Heart left ventricle (tissue), 16 donors: ENCODE measurements at regions of chr2 and their contacts with region 1.

Region 1: DNA sequence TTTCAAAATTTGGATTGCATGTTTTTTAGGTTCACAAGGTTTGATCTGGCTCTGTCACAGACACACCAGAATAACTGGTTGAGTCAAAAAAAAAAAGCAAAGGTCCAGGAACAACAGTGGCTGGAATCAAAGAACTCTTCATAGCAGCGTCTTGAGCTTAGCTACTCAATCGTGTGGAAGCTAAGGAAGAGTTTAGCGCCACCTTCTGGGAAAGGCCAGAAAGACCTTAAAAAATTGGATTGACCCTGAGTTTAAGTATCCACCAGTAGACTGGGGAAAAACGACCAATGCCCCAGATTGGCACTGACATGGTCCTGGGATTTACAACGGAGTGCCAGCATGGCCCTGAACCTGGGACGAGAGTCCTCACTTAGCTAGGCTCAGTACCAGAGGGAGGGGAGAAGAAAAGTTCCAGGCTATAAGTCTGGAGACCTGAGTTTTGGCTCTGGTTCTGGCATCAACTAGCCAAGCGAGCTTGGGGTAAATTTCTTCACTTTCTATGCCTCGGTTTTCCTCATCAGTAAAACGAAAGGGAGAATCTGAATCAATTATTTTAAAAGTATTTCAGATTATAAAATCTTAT is 71.1 kb upstream of the TFCP2L1 start:
- DNase-seq: peak in 1 of 5 donors; percentile 29
- ATAC-seq: peak in 2 of 4 donors; percentile 23 to 41
- H3K4me3 ChIP-seq: no peak overlapping the region
- H3K27ac ChIP-seq: peak overlapping the region in 1 of 12 donors; percentile 14
- H3K4me1 ChIP-seq: peaks cover 0 to 37% (median 14%) of the 10 kb centered on the region in 12 donors
- H3K27me3 ChIP-seq: no peaks in the 10 kb centered on the region
- CTCF ChIP-seq: peak; percentile 40 to 74 (median 64)
- POLR2A ChIP-seq: no peak

Region 2: GRCh38 chr2:120693121-120693520 is 663.0 kb before region 1 on chr2:
- intact Hi-C with region 1: loop called in 1 of 10 experiments (anchors 10 kb)
- DNase-seq: no peak
- ATAC-seq: no peak
- H3K4me3 ChIP-seq: no peak overlapping the region
- H3K27ac ChIP-seq: no peak overlapping the region
- H3K4me1 ChIP-seq: peaks cover 0 to 5% (median 0%) of the 10 kb centered on the region in 12 donors
- H3K27me3 ChIP-seq: peaks cover 0 to 57% (median 16%) of the 10 kb centered on the region in 9 donors
- CTCF ChIP-seq: no peak
- POLR2A ChIP-seq: no peak

Region 3: DNA sequence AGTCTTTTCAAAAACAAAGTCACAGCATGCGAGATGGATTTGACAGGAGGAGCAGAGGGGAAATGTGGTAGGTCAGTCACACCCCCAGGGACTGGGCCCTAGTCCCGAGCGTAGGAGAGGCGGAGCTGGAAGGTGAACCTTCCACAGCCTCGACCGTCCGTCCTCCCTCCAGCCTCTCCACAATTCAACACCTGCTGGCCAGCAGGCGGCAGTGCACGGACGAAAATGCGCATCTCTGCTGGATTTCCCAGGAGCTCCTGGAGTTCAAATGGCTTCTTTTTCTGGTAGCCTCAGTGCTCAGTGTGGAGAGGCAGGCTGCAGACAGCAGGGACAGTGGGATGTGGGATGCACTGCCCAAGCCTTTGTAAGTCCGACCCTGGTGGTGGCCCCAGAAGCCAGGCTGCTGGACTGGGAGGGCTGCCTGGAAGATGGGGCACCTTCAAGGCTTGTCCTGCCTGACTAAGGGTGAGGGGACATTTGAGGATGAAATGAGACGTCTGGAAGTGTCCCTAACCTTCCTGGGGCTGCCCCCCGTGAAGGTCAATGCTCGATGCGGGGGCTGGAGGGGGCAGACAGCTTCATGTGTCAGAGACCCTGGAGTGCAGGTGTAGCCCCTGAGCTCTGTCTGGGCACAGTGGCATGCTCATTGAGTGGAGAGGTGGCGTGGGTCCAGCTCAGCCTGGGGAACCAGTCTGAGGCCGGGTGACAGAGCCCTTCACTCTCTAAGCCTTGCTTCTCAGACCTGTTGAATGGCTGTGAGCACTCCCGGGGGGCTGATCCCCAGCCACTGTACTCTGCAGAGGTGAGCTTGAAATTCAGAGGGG is 260.7 kb before region 1 on chr2:
- intact Hi-C with region 1: loop called (anchors 2 to 10 kb)
- DNase-seq: peak; percentile 45 to 77 (median 64)
- ATAC-seq: peak; percentile 18 to 48 (median 36)
- H3K4me3 ChIP-seq: no peak overlapping the region
- H3K27ac ChIP-seq: no peak overlapping the region
- H3K4me1 ChIP-seq: peaks cover 0 to 11% (median 2%) of the 10 kb centered on the region in 12 donors
- H3K27me3 ChIP-seq: no peaks in the 10 kb centered on the region
- CTCF ChIP-seq: peak; percentile 53 to 68 (median 59)
- POLR2A ChIP-seq: no peak

Region 4: GRCh38 chr2:121128754-121129659 is 227.1 kb before region 1 on chr2:
- intact Hi-C with region 1: loop called in 2 of 10 experiments (anchors 10 kb)
- DNase-seq: peak in 1 of 5 donors; percentile 40
- ATAC-seq: peak in 3 of 4 donors; percentile 43 to 61 (median 52)
- H3K4me3 ChIP-seq: no peak overlapping the region
- H3K27ac ChIP-seq: no peak overlapping the region
- H3K4me1 ChIP-seq: no peaks in the 10 kb centered on the region
- H3K27me3 ChIP-seq: peaks cover 0 to 13% (median 0%) of the 10 kb centered on the region in 9 donors
- CTCF ChIP-seq: peak; percentile 29 to 60 (median 44)
- POLR2A ChIP-seq: no peak

Region 5: DNA sequence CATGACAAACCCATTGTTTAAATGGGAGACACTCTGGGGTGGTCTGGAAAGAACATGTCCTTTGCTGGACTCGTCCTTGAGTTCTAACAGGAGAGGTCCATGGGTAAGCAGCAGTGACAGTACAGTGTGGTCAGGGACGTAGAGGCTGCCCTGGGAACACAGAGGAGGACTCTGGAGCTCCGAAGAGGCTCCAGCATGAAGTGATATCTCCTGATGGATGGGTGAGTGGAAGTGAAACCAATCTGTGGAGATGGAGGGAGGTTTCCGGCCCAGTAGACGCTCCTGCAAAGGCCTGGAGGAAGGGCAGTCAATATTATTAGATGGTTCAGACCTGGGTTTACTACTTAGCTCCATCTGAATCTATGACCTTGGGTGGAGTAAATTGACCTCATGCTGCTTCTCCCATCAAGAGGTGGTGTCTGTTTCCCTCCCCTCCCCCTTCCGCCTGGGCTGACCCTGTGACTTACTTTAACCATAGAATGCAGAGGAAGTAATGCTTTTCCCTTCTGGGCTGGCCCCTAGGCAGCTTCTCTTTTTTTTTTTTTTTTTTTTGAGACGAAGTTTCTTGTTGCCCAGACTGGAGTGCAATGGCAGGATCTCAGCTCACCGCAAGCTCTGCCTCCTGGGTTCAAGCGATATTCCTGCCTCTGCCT is 68.9 kb before region 1 on chr2:
- intact Hi-C with region 1: no loop called
- DNase-seq: peak in 2 of 5 donors; percentile 17 to 37
- ATAC-seq: peak in 3 of 4 donors; percentile 48 to 59 (median 53)
- H3K4me3 ChIP-seq: no peak overlapping the region
- H3K27ac ChIP-seq: peak overlapping the region in 1 of 12 donors; percentile 42
- H3K4me1 ChIP-seq: peaks cover 0 to 28% (median 6%) of the 10 kb centered on the region in 12 donors
- H3K27me3 ChIP-seq: peaks cover 0 to 39% (median 15%) of the 10 kb centered on the region in 9 donors
- CTCF ChIP-seq: no peak
- POLR2A ChIP-seq: no peak

Region 6: DNA sequence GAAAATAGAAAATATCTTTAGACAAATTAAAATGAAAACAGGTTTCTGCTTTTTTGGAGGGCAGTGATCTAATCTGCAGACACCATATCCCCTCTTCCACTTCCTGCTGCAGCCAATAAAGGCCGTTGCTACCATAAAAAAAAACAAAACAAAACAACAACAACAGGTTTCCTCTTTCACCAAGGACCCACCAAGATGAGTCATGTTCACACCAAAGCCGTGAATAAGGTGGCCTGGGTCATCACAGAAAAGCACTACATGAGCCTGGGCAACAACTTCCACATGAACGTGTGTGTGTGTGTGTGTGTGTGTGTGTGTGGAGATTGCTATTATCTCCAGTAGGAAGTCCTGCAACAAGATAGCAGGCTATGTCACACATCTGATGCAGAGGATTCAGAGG is 46.3 kb before region 1 on chr2:
- intact Hi-C with region 1: no loop called
- DNase-seq: no peak
- ATAC-seq: no peak
- H3K4me3 ChIP-seq: no peak overlapping the region
- H3K27ac ChIP-seq: no peak overlapping the region
- H3K4me1 ChIP-seq: no peaks in the 10 kb centered on the region
- H3K27me3 ChIP-seq: peaks cover 0 to 11% (median 0%) of the 10 kb centered on the region in 9 donors
- CTCF ChIP-seq: no peak
- POLR2A ChIP-seq: no peak